ENCODE measurements at regions of chr9 and their contacts with region 1.

Region 1: DNA sequence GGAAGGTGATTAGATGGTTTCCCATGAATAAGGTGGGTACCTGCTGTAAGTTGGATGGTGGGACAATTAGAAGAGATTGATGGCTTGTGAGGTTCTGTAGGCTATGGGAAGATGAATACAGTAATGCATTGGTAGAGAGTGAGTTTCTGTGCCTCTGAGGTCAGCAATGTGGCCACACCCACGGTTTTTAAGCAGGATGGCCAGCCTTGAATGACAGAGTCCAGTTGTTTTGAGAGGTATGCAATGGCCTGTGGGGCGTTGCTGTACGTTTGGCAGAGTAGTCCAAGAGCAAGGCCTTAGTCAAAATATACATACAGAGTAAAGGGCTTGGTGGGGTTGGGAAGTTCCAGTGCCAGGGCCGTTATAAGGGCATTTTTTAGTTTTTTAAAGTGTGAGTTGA is 235.6 kb upstream of the C9orf72 start:
- DNase-seq: no peak
- ATAC-seq: no peak
- H3K4me3 ChIP-seq: no peak overlapping the region
- H3K27ac ChIP-seq: no peak overlapping the region
- H3K4me1 ChIP-seq: no peaks in the 10 kb centered on the region
- H3K27me3 ChIP-seq: no peaks in the 10 kb centered on the region
- CTCF ChIP-seq: no peak
- EP300 ChIP-seq: no peak
- POLR2A ChIP-seq: no peak
- RAD21 ChIP-seq: no peak

Region 2: GRCh38 chr9:27664121-27664779 is 144.6 kb before region 1 on chr9:
- CTCF ChIA-PET with region 1: no interaction called
- POLR2A ChIA-PET with region 1: no interaction called
- RAD21 ChIA-PET with region 1: no interaction called
- SMC1A ChIA-PET with region 1: no interaction called
- in situ Hi-C with region 1: no loop called
- intact Hi-C with region 1: no loop called
- DNase-seq: no peak
- ATAC-seq: no peak
- H3K4me3 ChIP-seq: no peak overlapping the region
- H3K27ac ChIP-seq: no peak overlapping the region
- H3K4me1 ChIP-seq: no peaks in the 10 kb centered on the region
- H3K27me3 ChIP-seq: no peaks in the 10 kb centered on the region; a peak in 1 of 4 replicates
- CTCF ChIP-seq: no peak
- EP300 ChIP-seq: no peak
- POLR2A ChIP-seq: no peak
- RAD21 ChIP-seq: no peak

Region 3: GRCh38 chr9:27701587-27701986 is 107.3 kb before region 1 on chr9:
- CTCF ChIA-PET with region 1: no interaction called
- POLR2A ChIA-PET with region 1: no interaction called
- RAD21 ChIA-PET with region 1: no interaction called
- SMC1A ChIA-PET with region 1: no interaction called
- in situ Hi-C with region 1: no loop called
- intact Hi-C with region 1: no loop called
- DNase-seq: no peak
- ATAC-seq: no peak
- H3K4me3 ChIP-seq: no peak overlapping the region
- H3K27ac ChIP-seq: no peak overlapping the region
- H3K4me1 ChIP-seq: no peaks in the 10 kb centered on the region
- H3K27me3 ChIP-seq: no peaks in the 10 kb centered on the region
- CTCF ChIP-seq: no peak
- EP300 ChIP-seq: no peak
- POLR2A ChIP-seq: no peak
- RAD21 ChIP-seq: no peak

Region 4: DNA sequence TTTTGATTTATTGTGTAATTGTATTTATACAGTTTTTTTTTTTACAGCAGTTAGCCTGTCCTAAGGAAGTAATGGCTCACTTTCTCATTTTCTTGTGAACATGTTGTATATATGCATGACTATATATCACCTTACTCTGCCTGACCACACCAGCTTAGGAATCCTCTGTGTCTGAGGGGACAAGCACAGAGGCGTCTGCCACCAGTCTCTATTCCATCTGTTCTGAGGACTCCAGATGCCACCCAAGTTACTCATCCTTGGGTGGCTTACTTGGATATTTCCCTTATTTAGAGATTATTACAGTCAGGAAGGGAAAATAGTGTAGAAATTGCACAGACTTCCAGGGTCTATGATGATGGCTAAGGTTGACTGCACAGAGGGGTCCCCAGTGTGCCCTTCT is 20.8 kb after region 1 on chr9:
- CTCF ChIA-PET with region 1: no interaction called
- POLR2A ChIA-PET with region 1: no interaction called
- RAD21 ChIA-PET with region 1: no interaction called
- SMC1A ChIA-PET with region 1: interaction called, 4 read pairs
- in situ Hi-C with region 1: no loop called
- intact Hi-C with region 1: loop called (anchors 2 kb)
- DNase-seq: no peak
- ATAC-seq: no peak
- H3K4me3 ChIP-seq: no peak overlapping the region
- H3K27ac ChIP-seq: no peak overlapping the region
- H3K4me1 ChIP-seq: no peaks in the 10 kb centered on the region
- H3K27me3 ChIP-seq: no peaks in the 10 kb centered on the region
- CTCF ChIP-seq: no peak
- EP300 ChIP-seq: no peak
- POLR2A ChIP-seq: no peak
- RAD21 ChIP-seq: no peak